AG04450 (cell line): ENCODE measurements at regions of chr1 and their contacts with region 1.

Region 1: GRCh38 chr1:179447489-179447888 is 81.7 kb downstream of the AXDND1 start:
- DNase-seq: no peak
- H3K4me3 ChIP-seq: no peak overlapping the region
- H3K27ac ChIP-seq: no peak overlapping the region
- H3K27me3 ChIP-seq: peaks cover 2% of the 10 kb centered on the region
- CTCF ChIP-seq: peak; percentile 29; the same call in 1 of the 2 replicates

Region 2: DNA sequence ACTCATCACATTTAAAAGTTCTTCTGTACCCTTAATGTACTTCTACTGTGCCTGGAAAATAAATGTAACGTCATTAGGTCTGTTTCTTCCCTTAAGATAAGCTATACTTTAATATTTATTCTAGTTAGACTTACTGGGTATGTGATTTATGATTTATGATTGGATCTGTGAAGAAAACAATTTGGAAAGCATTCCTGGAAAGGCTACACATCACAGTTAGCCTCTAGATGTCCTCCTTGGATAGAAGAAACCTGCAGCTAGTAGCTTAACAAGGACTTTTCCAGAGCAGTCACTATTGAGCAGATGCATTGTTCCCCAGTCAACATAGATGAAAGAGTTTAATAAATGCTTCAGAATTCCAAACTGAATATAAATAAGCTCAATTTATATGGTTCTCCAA is 195.8 kb before region 1 on chr1:
- CTCF ChIA-PET with region 1: interaction called, 11 read pairs
- POLR2A ChIA-PET with region 1: no interaction called
- DNase-seq: no peak
- H3K4me3 ChIP-seq: no peak overlapping the region
- H3K27ac ChIP-seq: no peak overlapping the region
- H3K27me3 ChIP-seq: no peaks in the 10 kb centered on the region
- CTCF ChIP-seq: peak; percentile 53